ENCODE measurements at regions of chr1 and their contacts with region 1.

Region 1: DNA sequence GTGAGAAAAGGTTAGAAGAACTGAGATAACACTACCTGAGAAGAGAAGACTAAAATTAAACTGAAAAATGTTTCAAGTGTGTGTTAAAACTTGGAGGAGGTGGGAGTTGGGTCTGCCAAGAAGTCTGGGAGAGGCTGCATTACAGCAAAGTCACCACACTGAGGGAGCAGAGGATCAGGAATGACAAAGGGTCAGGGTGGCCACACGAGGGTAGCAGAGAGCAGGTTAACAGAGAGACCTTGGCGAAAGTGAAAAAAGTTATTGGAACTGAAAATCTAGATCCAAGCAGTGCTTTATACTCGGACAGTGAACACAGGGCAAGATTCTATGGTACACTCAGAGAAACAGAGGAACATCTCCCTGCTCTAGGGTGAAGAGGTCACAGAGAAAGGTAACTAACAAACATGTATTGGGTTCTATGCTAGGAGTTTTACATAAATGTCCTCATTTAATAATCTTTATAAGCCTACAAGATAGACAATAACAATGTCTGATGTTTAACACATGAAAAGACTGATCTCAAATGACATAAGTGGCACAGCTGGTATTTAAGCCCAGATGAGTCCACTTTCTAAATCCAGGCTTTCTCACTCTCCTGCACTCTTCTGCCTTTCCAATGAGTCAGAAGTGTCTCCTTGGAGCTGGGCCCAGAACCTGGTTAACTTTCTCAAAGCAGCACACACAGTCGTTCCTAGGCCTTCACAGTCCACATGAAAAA is 10.3 kb upstream of the CADM3 start:
- DNase-seq: peak; percentile 72 to 81
- ATAC-seq: peak; percentile 94 to 99 (median 98)
- H3K4me3 ChIP-seq: peak overlapping the region; percentile 6
- H3K27ac ChIP-seq: peak overlapping the region; percentile 82
- H3K4me1 ChIP-seq: peaks cover 9% of the 10 kb centered on the region
- H3K27me3 ChIP-seq: peaks cover 0 to 12% (median 0%) of the 10 kb centered on the region in 3 donors
- CTCF ChIP-seq: peak; percentile 94

Region 2: GRCh38 chr1:159197561-159198557 is 36.7 kb after region 1 on chr1:
- intact Hi-C with region 1: loop called (anchors 5 kb)
- DNase-seq: peak; percentile 44 to 59
- ATAC-seq: peak; percentile 68 to 88 (median 82)
- H3K4me3 ChIP-seq: no peak overlapping the region
- H3K27ac ChIP-seq: no peak overlapping the region
- H3K4me1 ChIP-seq: no peaks in the 10 kb centered on the region
- H3K27me3 ChIP-seq: peaks cover 0 to 9% (median 0%) of the 10 kb centered on the region in 3 donors
- CTCF ChIP-seq: peak; percentile 70

Region 3: GRCh38 chr1:159214149-159214760 is 53.1 kb after region 1 on chr1:
- intact Hi-C with region 1: loop called (anchors 2 to 5 kb)
- DNase-seq: no peak
- ATAC-seq: peak in 3 of 4 donors; percentile 67 to 74 (median 73)
- H3K4me3 ChIP-seq: no peak overlapping the region
- H3K27ac ChIP-seq: no peak overlapping the region
- H3K4me1 ChIP-seq: no peaks in the 10 kb centered on the region
- H3K27me3 ChIP-seq: peaks cover 0 to 18% (median 3%) of the 10 kb centered on the region in 3 donors
- CTCF ChIP-seq: peak; percentile 80

Measured in psoas muscle (tissue), 8 donors.